ENCODE measurements at regions of chr9 and their contacts with region 1.

Region 1: DNA sequence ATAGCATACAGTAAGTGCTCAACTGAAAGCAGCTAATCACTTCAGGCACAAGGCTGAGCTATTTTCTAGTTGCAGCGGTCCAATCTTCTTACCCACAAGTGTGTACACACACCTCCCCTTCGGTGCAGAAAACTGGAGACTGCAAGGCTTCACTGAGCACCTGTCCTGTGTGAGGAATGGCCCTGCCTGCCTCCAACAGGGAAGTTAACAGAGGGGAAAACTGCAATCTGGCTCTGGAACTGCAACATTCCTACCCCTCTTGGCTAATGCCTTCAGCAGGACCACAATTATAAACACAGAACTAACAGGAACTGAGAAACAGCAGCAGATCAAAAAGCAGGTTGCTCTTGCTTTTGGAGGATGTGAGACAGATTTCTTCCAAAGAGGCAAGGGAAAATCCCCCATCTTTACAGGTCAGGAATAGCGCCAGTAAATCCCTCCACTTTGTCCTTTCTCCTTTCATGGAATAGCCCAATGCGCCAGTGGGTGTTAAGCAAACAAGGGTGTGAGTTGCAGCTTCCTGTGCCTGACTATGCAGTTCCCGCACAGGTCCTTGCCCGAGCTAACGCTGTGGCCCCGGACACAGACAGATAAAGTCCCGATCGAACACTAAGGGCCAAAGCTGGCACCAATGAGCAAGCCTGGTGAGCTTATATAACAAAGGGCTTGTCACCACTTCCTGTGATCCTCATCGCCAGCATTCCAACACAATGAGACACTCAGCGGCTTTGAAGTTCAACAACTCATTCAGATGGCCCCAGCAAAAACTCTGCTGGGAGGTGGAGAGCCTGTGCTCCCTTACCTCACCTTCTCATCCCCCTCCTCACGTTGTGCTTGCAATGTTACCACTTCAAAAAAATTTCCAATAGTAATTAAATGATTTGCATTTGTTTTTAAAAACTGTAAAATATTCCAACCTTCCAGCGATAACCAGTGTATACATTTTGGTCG is 21.5 kb downstream of the SHB start:
- DNase-seq: peak; percentile 81
- H3K4me3 ChIP-seq: peak overlapping the region in 1 of 3 experiments; percentile 12
- H3K27ac ChIP-seq: peak overlapping the region; percentile 76
- H3K4me1 ChIP-seq: peaks cover 51% of the 10 kb centered on the region
- H3K27me3 ChIP-seq: no peaks in the 10 kb centered on the region
- CTCF ChIP-seq: no peak

Region 2: GRCh38 chr9:37943329-37944265 is 104.0 kb before region 1 on chr9:
- CTCF ChIA-PET with region 1: no interaction called
- dilution Hi-C with region 1: loop called (anchors 5 kb)
- in situ Hi-C with region 1: no loop called
- intact Hi-C with region 1: no loop called
- DNase-seq: peak; percentile 83
- H3K4me3 ChIP-seq: no peak overlapping the region
- H3K27ac ChIP-seq: peak overlapping the region; percentile 3
- H3K4me1 ChIP-seq: peaks cover 52% of the 10 kb centered on the region
- H3K27me3 ChIP-seq: no peaks in the 10 kb centered on the region
- CTCF ChIP-seq: no peak

Region 3: GRCh38 chr9:37953775-37954437 is 93.7 kb before region 1 on chr9:
- CTCF ChIA-PET with region 1: no interaction called
- dilution Hi-C with region 1: loop called (anchors 5 kb)
- in situ Hi-C with region 1: no loop called
- intact Hi-C with region 1: loop called (anchors 5 kb)
- DNase-seq: peak; percentile 99
- H3K4me3 ChIP-seq: no peak overlapping the region
- H3K27ac ChIP-seq: peak overlapping the region; percentile 82
- H3K4me1 ChIP-seq: peaks cover 46% of the 10 kb centered on the region
- H3K27me3 ChIP-seq: no peaks in the 10 kb centered on the region
- CTCF ChIP-seq: no peak

Region 4: GRCh38 chr9:37963936-37964739 is 83.4 kb before region 1 on chr9:
- CTCF ChIA-PET with region 1: interaction called, 3 read pairs
- dilution Hi-C with region 1: no loop called
- in situ Hi-C with region 1: no loop called
- intact Hi-C with region 1: loop called (anchors 5 kb)
- DNase-seq: peak; percentile 91
- H3K4me3 ChIP-seq: no peak overlapping the region
- H3K27ac ChIP-seq: peak overlapping the region; percentile 77
- H3K4me1 ChIP-seq: peaks cover 62% of the 10 kb centered on the region
- H3K27me3 ChIP-seq: no peaks in the 10 kb centered on the region
- CTCF ChIP-seq: no peak

Region 5: GRCh38 chr9:38026021-38026809 is 21.4 kb before region 1 on chr9:
- CTCF ChIA-PET with region 1: no interaction called
- dilution Hi-C with region 1: no loop called
- in situ Hi-C with region 1: no loop called
- intact Hi-C with region 1: loop called (anchors 1 kb)
- DNase-seq: peak; percentile 90
- H3K4me3 ChIP-seq: no peak overlapping the region
- H3K27ac ChIP-seq: peak overlapping the region; percentile 82
- H3K4me1 ChIP-seq: peaks cover 54% of the 10 kb centered on the region
- H3K27me3 ChIP-seq: no peaks in the 10 kb centered on the region
- CTCF ChIP-seq: no peak

Region 6: GRCh38 chr9:38154501-38155421 is 107.2 kb after region 1 on chr9:
- CTCF ChIA-PET with region 1: no interaction called
- dilution Hi-C with region 1: no loop called
- in situ Hi-C with region 1: no loop called
- intact Hi-C with region 1: no loop called
- DNase-seq: peak; percentile 61
- H3K4me3 ChIP-seq: no peak overlapping the region
- H3K27ac ChIP-seq: no peak overlapping the region
- H3K4me1 ChIP-seq: peaks cover 4% of the 10 kb centered on the region
- H3K27me3 ChIP-seq: no peaks in the 10 kb centered on the region
- CTCF ChIP-seq: no peak

Region 7: GRCh38 chr9:38178237-38178636 is 130.7 kb after region 1 on chr9:
- CTCF ChIA-PET with region 1: no interaction called
- dilution Hi-C with region 1: no loop called
- in situ Hi-C with region 1: no loop called
- intact Hi-C with region 1: no loop called
- DNase-seq: peak; percentile 82
- H3K4me3 ChIP-seq: no peak overlapping the region
- H3K27ac ChIP-seq: no peak overlapping the region
- H3K4me1 ChIP-seq: peaks cover 20% of the 10 kb centered on the region
- H3K27me3 ChIP-seq: no peaks in the 10 kb centered on the region
- CTCF ChIP-seq: no peak

Region 8: GRCh38 chr9:38263532-38263931 is 216.0 kb after region 1 on chr9:
- CTCF ChIA-PET with region 1: no interaction called
- dilution Hi-C with region 1: no loop called
- in situ Hi-C with region 1: no loop called
- intact Hi-C with region 1: no loop called
- DNase-seq: peak; percentile 31
- H3K4me3 ChIP-seq: no peak overlapping the region
- H3K27ac ChIP-seq: no peak overlapping the region
- H3K4me1 ChIP-seq: no peaks in the 10 kb centered on the region
- H3K27me3 ChIP-seq: no peaks in the 10 kb centered on the region
- CTCF ChIP-seq: peak; percentile 41 to 61

Measured in mammary epithelial cell (primary cell).